ENCODE measurements at regions of chr22 and their contacts with region 1.

Region 1: DNA sequence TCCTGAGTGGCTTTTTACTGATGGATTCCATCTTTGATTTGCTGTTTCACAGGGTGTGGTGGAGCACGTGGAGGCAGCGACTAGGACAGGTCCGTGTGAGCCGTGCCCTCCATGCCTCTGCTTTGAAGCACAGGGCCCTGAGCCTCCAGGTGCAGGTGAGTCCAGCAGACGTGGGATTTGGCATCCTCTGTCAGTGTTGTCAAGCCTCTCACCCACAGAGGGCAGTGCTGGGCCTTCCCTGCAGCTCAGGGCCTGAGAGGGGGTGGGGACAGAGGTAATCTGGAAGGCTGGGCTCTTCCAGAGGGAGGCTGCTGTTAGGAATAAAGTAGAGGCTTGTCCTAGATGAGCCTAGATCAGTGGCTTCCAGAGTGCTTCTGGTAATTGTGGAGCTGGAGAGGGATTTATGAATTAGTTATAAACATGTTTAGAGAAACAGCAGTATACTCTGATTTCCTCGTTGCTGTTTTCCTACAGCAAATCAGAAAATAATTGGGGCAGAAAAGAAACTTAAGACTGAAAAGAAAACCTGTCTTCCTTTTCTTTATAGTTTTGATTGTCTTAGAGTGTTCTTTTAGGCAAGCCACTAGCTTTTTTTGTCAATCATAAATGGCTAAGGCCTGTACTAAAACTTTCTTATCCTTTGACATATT is 65.0 kb downstream of the SFI1 start:
- DNase-seq: no peak
- H3K4me3 ChIP-seq: no peak overlapping the region
- CTCF ChIP-seq: peak; percentile 98

Region 2: GRCh38 chr22:31537019-31537535 is 24.3 kb before region 1 on chr22:
- CTCF ChIA-PET with region 1: interaction called, 30 read pairs
- POLR2A ChIA-PET with region 1: no interaction called
- DNase-seq: no peak
- H3K4me3 ChIP-seq: no peak overlapping the region
- CTCF ChIP-seq: no peak

Region 3: DNA sequence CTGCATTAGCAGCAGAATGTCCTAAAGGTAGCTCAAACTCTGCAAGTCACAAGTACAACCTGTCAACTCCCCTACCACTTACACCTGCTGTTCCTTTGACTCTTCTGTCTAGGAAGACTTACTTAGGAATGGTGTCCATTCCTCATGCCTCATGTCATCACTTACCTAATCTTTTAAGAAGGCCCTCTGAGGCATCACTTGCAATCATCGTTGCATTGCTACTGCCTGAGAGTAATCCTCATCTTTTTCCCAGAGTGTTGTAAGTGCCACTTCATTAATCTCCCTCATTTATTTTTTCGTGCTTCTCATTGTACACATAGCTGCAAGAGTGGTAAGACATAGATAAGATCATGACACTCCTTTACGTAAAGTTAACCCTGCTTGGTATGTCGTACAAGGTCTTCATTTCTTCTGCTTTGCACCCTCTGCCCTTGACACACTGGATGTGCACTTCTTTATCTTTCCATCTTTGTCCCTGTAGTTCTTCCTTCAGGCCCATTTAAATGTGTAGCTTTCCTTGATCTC is 10.4 kb before region 1 on chr22:
- CTCF ChIA-PET with region 1: interaction called, 46 read pairs
- POLR2A ChIA-PET with region 1: no interaction called
- DNase-seq: no peak
- H3K4me3 ChIP-seq: no peak overlapping the region
- CTCF ChIP-seq: no peak

Region 4: GRCh38 chr22:31585161-31585859 is 23.9 kb after region 1 on chr22:
- CTCF ChIA-PET with region 1: interaction called, 21 read pairs
- POLR2A ChIA-PET with region 1: no interaction called
- DNase-seq: no peak
- H3K4me3 ChIP-seq: no peak overlapping the region
- CTCF ChIP-seq: no peak

Region 5: DNA sequence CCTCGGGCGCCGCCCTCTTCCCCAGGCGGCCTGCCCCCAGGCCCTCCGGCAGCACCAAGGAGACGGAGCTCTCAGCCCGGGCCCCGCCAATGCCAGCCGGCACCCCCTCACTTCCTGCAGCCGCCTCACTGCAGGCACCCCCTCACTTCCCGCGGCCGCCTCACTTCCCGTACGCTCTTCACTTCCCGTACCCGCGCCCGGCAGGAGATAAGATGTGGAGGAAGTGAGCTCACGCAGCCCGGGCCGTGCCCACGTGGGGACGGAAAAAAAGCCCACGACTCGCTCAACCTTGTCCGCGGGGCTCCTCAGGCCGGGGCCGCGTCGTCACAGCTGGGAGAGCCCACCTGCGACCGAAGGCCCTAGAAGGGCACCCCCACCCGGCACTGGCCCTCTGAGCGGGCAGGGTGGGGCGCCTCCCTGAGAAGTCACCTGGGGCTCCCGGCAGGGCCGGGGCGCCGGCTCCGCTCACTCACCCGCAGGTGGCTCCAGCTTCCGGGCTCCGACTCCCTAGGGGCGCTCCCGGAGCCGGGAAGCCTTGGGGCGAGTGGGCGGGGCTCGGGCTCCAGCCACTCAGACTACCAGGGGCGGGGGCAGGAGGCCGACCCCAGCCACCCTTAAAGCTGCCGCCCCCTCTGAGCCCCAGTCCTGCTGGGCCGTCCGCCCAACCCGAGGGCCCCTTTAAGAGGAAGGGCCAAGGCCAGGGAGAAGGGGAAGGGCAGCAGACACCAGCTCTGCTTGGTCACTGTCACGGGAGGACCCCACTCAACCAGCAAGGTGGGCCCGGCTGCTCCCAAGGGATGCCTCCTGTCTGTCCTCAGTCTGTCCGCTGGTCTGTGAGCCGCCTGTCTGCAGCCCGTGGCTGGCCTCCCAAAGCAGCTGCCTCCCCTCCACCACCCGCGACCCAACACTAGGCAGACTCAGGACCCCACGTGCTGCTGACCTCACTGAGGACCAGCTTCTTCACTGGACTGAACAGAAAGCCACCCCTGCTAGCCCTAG is 69.3 kb after region 1 on chr22:
- CTCF ChIA-PET with region 1: interaction called, 417 read pairs
- POLR2A ChIA-PET with region 1: no interaction called
- DNase-seq: no peak
- H3K4me3 ChIP-seq: peak overlapping the region; percentile 76
- CTCF ChIP-seq: no peak

Region 6: GRCh38 chr22:31661851-31662656 is 100.7 kb after region 1 on chr22 and contains the start of gene PISD:
- CTCF ChIA-PET with region 1: interaction called, 12 read pairs
- POLR2A ChIA-PET with region 1: no interaction called
- DNase-seq: no peak
- H3K4me3 ChIP-seq: peak within 1 kb of the TSS; percentile 98
- CTCF ChIP-seq: no peak

Region 7: GRCh38 chr22:31970490-31971444 is 409.4 kb after region 1 on chr22:
- CTCF ChIA-PET with region 1: interaction called, 28 read pairs
- POLR2A ChIA-PET with region 1: no interaction called
- DNase-seq: no peak
- H3K4me3 ChIP-seq: peak overlapping the region; percentile 61
- CTCF ChIP-seq: peak; percentile 98

Measured in AG04449 (cell line).